GM13977 (cell line): ENCODE measurements at regions of chr16 and their contacts with region 1.

Region 1: DNA sequence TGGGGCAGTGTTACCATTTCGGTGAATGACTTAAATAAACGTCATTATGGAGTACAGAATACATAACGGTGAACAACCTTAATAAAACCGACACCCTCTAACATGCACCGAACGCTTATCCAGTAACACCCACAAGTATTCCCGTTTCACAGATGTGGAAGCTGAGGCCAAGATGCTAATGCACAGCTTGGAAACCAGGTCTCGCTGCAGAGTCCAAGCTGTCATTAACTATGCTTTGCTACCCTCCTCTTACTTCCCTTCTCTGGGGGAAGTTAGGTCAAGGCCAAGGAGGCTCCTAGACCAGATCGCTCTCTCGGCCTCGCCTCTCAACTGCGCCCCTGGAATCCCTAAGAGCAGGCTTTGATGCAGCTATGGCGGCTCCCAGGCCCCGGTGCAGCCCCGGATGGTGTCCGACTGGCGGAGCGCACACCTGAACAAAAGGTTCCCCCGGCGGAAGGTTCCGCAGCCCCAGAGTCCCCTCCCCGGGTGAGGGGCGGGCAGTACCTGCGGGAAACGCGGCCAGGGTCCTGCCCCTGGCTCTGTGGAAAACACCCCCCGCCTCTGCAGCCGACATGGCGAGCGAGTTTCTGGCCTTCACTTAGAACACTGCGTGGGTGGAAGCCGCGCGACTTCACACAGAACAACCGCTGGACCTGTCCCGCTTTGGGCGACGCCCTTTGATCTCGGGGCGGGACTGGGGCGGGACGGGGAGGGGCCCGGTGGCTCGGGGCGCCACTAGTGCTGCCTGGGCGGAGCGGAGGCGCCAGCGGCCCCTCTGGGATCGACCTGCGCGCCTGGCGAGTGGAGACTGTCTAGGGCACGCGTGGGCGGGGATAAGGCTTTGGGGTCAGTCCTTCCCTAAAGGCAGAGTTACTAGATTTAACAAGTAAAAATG is at the start of gene CPPED1:
- DNase-seq: peak; percentile 89
- CTCF ChIP-seq: peak; percentile 6

Region 2: GRCh38 chr16:12095275-12096156 is 707.9 kb before region 1 on chr16:
- in situ Hi-C with region 1: loop called (anchors 25 kb)
- DNase-seq: peak; percentile 68
- CTCF ChIP-seq: peak; percentile 73

Region 3: DNA sequence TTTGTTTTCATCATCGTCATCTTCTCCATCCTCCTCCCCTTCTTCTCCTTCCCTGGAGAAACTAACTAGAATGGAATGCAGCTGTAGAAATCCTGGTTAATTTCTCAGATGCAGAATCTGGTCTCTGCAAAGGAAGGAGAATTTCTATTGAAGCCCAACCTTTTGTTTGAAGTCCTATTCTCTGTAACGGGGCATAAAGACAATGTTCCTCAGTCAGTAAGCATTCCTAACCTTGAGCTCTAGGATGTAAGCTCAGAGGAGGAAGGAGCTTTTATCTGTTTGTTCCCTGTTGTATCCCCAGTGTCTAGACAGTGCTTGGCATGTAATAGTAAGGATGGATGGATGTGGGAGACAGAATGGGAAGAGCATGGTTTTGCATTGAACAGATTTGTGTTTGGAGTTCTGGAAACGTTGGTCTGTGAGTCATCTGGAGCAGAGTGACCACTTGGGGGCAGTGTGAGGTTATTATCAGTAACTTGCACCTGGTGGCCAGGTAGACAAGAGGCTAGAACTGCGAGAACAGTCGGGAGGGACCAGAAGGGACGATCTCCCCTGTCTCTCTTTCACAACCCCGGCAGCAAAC is 463.2 kb before region 1 on chr16:
- in situ Hi-C with region 1: loop called (anchors 25 kb)
- DNase-seq: peak; percentile 50
- CTCF ChIP-seq: peak; percentile 71

Region 4: DNA sequence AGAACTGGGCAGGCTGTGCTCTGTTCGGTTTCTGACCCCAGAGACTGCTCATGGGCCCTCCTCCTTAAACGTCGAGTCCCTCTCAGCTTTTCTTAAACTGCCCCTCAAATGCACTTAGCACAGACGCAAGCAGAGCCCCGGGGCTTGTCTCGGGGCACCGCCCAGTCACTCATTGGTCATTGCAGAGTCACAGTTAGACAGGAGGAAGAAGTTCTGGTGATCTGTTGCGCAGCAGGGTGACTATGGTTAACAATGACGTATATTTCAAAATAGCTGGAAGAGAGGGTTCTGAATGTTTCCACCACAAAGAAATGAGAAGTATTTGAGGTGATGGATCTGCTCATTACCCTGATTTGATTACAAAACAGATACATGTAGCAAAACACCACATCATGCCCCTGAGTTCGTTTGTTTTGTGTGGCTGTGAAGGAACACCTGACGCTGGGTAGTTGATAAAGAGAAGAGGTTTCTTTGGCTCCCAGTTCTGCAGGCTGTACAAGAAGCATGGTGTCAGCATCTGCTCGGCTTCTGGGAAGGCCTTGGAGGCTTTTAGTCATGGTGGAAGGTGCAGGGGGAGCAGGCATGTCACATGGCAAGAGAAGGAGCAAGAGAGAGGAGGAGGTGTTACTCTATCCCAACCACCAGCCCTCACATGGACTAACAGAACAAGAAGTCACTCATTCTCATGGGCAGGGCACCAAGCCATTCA is 387.2 kb before region 1 on chr16:
- in situ Hi-C with region 1: no loop called
- DNase-seq: no peak
- CTCF ChIP-seq: no peak

Region 5: DNA sequence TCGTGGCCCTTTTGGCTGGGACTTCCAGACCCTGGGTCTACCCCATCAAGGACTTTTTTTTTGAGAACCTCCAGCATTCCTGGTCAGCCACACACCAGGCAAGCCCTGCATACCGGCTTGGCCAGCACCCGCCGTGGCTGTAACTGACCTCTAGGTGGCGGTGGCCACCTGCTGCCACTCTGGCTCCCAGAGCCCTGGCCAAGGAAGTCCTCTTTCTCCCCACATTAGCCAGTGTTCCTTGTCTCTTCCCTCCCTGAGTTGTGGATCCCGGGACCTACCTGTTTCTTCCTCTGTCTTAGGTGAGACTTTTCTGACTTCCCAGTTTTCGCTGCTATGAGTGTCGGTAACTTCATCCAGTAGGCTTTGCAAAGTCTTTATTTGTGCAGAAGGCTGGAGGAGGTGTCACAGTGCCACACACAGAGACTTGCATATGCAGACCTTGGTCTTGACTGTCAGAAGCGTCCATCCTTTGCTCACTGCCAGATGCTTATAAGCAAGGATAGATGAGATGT is 348.1 kb before region 1 on chr16:
- in situ Hi-C with region 1: loop called (anchors 25 kb)
- DNase-seq: no peak
- CTCF ChIP-seq: peak; percentile 88